ENCODE measurements at regions of chr5 and their contacts with region 1.

Region 1: GRCh38 chr5:66144074-66144833 is at the start of gene SREK1:
- DNase-seq: peak; percentile 84
- H3K4me3 Mint-ChIP-seq: peak within 1 kb of the TSS; percentile 96
- H3K27ac Mint-ChIP-seq: peak within 1 kb of the TSS; percentile 99
- H3K4me1 Mint-ChIP-seq: peaks cover 47% of the 10 kb centered on the region
- H3K27me3 Mint-ChIP-seq: peaks cover 2% of the 10 kb centered on the region
- total RNA-seq, gene SREK1: 72.0 and 76.7 TPM in 2 replicates

Region 2: GRCh38 chr5:65562731-65563701 is 581.2 kb before region 1 on chr5 and contains the starts of genes CENPK and PPWD1:
- intact Hi-C with region 1: loop called (anchors 1 kb)
- DNase-seq: peak; percentile 94
- H3K4me3 Mint-ChIP-seq: peak within 1 kb of the TSS; percentile 95
- H3K27ac Mint-ChIP-seq: peak within 1 kb of the TSS; percentile 99
- H3K4me1 Mint-ChIP-seq: peaks cover 53% of the 10 kb centered on the region
- H3K27me3 Mint-ChIP-seq: no peaks in the 10 kb centered on the region
- total RNA-seq, gene CENPK: 81.0 and 85.1 TPM in 2 replicates
- total RNA-seq, gene PPWD1: 63.6 and 65.4 TPM in 2 replicates

Region 3: DNA sequence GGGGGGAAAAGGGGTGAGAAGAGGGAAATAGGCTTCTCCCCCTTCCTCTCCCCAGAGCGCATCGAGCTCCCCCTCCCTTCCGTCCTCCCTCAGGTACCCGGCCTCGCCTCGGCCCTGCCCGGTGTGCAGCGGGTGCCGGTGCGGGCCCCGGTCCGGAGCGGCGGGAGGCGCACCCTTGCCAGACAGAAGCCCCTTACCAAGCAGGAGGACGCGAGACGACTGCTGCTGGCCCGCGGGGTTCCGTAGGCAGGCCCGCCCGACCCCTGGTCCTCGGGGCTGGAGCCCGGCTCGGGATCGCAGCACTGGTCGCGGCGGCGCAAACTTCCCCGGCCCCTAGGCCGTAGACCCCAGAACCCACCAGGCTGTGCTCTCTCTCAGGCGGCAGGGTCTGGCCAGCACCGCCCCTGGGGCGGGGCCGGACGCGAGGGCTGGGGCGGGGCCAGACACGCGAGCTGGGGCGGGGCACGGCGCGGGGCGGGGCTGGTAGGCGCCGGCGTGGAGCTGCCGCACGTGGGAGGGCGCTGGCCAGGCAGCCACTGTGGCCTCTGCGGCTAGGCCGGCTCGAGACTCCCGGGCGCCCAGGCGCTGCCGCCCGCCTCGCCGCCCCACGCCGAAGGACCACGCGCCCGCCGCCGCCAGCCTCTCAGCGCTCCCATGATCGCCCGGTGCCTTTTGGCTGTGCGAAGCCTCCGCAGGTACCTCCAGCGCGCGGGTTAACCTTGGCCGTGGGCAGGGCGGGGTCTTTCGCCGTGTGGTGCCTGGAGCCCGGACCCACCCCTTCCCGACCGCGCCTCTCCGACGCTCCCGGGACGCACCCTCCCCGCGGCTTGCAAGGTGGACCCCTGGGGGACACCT is 422.3 kb before region 1 on chr5 and contains the starts of genes NLN and SGTB:
- intact Hi-C with region 1: loop called (anchors 1 kb)
- DNase-seq: peak; percentile 81
- H3K4me3 Mint-ChIP-seq: peak within 1 kb of the TSS; percentile 95
- H3K27ac Mint-ChIP-seq: peak within 1 kb of the TSS; percentile 92
- H3K4me1 Mint-ChIP-seq: peaks cover 34% of the 10 kb centered on the region
- H3K27me3 Mint-ChIP-seq: no peaks in the 10 kb centered on the region
- total RNA-seq, gene NLN: 24.4 TPM in 2 replicates
- total RNA-seq, gene SGTB: 11.3 and 12.2 TPM in 2 replicates

Region 4: GRCh38 chr5:66002415-66002814 is 141.8 kb before region 1 on chr5:
- intact Hi-C with region 1: loop called (anchors 5 kb)
- DNase-seq: no peak
- H3K4me3 Mint-ChIP-seq: no peak overlapping the region
- H3K27ac Mint-ChIP-seq: no peak overlapping the region
- H3K4me1 Mint-ChIP-seq: peaks cover 20% of the 10 kb centered on the region
- H3K27me3 Mint-ChIP-seq: no peaks in the 10 kb centered on the region

Region 5: GRCh38 chr5:66113160-66113559 is 31.1 kb before region 1 on chr5:
- intact Hi-C with region 1: no loop called
- DNase-seq: no peak
- H3K4me3 Mint-ChIP-seq: no peak overlapping the region
- H3K27ac Mint-ChIP-seq: no peak overlapping the region
- H3K4me1 Mint-ChIP-seq: no peaks in the 10 kb centered on the region
- H3K27me3 Mint-ChIP-seq: no peaks in the 10 kb centered on the region

Region 6: DNA sequence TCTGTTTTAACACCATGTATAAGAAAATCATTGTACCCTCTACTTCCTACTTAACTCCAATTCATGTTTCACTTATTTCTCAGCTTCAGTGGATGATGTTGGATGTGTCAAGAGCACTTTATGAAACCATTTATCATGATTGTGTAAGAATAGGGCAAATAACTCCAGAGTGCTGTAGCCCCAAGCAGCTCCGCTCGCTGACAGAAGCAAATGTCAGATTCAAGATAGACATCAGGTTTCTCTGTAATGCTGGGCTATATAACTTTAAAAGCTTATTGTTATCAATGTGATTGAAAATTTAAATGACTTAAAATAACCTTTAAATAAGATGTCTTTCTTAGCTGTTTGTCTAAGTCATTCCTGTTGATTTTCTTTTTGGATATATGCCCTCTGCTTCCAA is 502.4 kb after region 1 on chr5:
- intact Hi-C with region 1: no loop called
- DNase-seq: no peak
- H3K4me3 Mint-ChIP-seq: no peak overlapping the region
- H3K27ac Mint-ChIP-seq: no peak overlapping the region
- H3K4me1 Mint-ChIP-seq: peaks cover 12% of the 10 kb centered on the region
- H3K27me3 Mint-ChIP-seq: peaks cover 12% of the 10 kb centered on the region

Region 7: GRCh38 chr5:67192719-67193438 is 1048.6 kb after region 1 on chr5:
- intact Hi-C with region 1: no loop called
- DNase-seq: no peak
- H3K4me3 Mint-ChIP-seq: no peak overlapping the region
- H3K27ac Mint-ChIP-seq: no peak overlapping the region
- H3K4me1 Mint-ChIP-seq: peaks cover 71% of the 10 kb centered on the region
- H3K27me3 Mint-ChIP-seq: no peaks in the 10 kb centered on the region

Measured in activated T-helper 1 cell treated with anti-CD3 and anti-CD28 coated beads, Interleukin-12 subunit alpha, Interleukin-12 subunit beta, Interleukin-2, Interleukin-4 antibody, amounts not matched to agents 30 ng/mL and 10 ng/mL and 1 ng/mL, durations not matched to agents 14 hours and 24 hours and 36 hours (primary cell).